Left cardiac atrium (tissue), 4 donors: ENCODE measurements at regions of chr19 and their contacts with region 1.

Region 1: GRCh38 chr19:4638828-4639530 is at the start of gene TNFAIP8L1:
- DNase-seq: peak; percentile 97
- ATAC-seq: peak; percentile 96 to 97
- total RNA-seq, gene TNFAIP8L1: 3.4 to 6.7 TPM

Region 2: DNA sequence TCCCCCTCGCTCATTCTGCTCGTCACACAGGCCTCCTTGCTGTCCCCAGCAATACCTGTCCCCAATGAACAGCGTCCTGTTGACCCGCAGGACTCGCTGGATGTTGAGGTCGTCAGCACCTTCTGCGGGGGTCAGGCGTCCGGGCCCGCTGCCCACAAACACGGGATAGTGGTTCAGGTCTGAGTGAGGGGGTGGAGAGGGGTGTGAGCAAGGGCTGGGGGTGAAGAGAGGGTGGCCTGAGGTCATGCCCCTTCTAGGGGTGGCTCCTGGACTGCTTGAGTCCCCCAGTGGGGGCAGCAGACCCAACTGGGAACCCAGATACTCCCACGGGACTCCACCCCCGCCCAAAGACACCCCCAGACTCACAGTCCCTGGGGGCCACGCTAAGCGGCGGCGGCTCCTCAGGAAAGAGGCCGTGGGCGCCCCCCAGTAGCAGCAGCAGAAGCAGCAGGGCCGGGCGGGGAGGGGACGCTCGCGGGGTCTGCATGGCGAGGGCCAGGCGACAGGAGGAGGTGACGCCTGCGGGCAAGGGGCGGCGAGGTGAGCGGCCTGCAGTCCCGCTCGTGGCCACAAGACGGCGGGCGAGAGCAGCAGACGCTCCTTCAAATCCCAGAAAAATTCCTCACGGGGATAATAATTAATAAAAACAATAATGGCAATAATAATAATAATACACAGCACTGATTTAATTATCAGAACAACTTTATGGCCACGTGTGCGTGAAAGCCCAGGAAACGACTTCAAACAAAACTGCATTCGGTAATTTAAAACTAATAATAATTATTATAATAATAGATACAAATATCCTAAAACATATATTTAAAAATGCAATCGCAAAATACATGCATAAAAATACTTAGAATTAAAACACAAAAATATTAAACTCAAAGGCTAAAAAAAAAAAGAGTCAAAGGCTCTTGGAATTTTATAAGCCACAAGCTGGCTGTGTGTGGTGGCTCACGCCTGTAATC is 80.7 kb before region 1 on chr19:
- intact Hi-C with region 1: loop called (anchors 2 to 5 kb)
- DNase-seq: no peak
- ATAC-seq: peak in 1 of 2 donors; percentile 7

Region 3: DNA sequence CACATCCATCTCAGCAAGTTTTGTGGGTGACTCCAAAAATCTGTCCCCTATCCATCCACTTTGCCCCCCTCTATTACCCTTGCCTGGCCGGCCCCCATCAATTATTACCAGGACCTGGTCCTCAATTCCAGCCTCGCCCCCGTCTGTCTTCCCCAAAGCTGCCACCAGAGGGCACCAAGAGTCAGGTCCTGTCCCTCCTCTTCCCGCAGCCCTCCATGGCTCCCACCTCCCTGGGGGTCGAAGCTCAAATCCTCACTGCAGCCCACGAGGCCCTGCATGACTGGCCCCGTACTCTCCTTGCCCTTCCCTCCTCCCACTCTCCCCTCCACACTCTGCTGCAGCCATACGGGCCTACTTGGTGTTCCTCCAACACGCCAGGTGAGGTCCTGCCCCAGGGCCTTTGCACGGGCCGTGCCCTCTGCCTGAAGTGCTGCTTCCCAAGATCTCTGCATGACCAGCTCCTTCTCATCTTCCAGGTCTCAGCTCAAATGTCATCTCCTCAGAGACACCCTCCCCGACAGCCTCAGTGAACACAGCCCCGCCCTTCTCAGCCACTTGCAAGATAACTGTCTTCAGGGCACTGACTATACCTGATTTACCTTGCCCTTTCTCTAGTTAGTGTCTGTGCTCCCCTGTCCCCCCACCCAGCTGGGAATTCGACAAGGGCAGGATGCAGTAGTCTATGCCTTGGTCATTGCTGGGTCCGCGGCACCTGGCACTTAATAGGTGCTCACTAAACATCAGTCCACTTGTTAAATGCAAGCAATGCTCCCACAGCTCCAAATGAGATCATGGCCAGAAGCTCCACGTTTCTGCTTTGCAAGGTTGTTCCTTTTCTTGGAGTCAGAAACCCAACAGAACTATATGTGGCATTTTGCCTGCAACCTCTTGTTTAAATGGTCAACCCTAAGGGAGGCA is 62.7 kb before region 1 on chr19:
- intact Hi-C with region 1: loop called (anchors 5 kb)
- DNase-seq: peak; percentile 71
- ATAC-seq: peak; percentile 28 to 48